Ascending aorta (tissue), 2 donors: ENCODE measurements at regions of chr2 and their contacts with region 1.

Region 1: DNA sequence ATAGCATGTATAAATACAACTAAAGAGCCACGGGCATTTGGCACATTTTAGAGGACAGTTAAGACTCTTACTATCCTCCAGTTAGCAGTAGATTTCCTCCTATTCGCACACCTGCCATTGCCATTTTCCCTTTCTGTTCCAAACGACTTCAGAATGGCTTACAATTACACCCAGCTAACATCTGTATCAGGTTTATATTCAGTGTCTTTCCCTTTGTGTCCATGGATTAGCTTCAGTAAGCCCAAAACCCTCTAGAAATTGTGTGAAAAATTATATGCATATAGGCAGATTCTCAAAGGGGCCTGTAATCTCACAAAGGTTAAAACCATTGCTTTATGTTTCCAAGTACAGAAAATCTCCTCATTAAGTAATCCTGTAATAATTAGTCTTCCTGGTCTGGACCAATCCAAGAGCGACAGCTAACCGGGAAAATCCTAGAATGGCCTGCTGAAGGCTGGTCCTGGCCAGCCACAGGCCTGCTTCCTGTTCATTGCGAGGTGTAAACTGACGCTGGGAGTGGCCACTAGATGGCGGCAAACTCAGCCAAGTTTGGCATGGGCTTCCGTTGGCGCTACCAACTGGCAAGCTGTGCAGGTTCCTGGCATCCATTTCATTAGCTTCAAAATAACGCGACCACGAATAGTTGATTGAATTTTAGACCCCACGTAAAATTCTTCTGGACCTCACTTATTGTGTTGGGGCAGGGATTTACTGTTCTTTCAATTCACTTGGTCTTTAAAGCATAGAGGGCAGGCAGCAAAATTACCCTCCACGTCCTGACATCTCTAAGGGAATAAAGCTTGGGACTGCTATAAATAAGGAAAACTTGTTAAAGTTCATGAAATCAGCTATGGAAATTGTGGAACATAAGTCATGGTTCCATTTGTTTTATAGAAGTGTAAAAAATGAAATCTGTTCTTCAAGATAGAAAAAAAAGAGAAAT is 17.1 kb downstream of the ARHGAP25 start:
- DNase-seq: peak; percentile 67 to 93
- H3K4me3 ChIP-seq: peak overlapping the region in 1 of 2 donors; percentile 29
- H3K27ac ChIP-seq: no peak overlapping the region
- H3K4me1 ChIP-seq: peaks cover 0 to 4% of the 10 kb centered on the region in 2 donors
- H3K27me3 ChIP-seq: no peaks in the 10 kb centered on the region
- CTCF ChIP-seq: peak; percentile 86 to 91 (median 89)

Region 2: GRCh38 chr2:68811364-68811763 is 59.7 kb after region 1 on chr2:
- intact Hi-C with region 1: loop called (anchors 5 kb)
- DNase-seq: peak in 1 of 2 donors; percentile 84
- H3K4me3 ChIP-seq: no peak overlapping the region
- H3K27ac ChIP-seq: peak overlapping the region; percentile 67 to 78
- H3K4me1 ChIP-seq: peaks cover 5 to 11% of the 10 kb centered on the region in 2 donors
- H3K27me3 ChIP-seq: no peaks in the 10 kb centered on the region
- CTCF ChIP-seq: no peak

Region 3: GRCh38 chr2:68832233-68832869 is 80.7 kb after region 1 on chr2:
- intact Hi-C with region 1: loop called (anchors 2 kb)
- DNase-seq: peak; percentile 70 to 94
- H3K4me3 ChIP-seq: no peak overlapping the region
- H3K27ac ChIP-seq: peak overlapping the region; percentile 95 to 97
- H3K4me1 ChIP-seq: peaks cover 28 to 45% of the 10 kb centered on the region in 2 donors
- H3K27me3 ChIP-seq: no peaks in the 10 kb centered on the region
- CTCF ChIP-seq: no peak

Region 4: DNA sequence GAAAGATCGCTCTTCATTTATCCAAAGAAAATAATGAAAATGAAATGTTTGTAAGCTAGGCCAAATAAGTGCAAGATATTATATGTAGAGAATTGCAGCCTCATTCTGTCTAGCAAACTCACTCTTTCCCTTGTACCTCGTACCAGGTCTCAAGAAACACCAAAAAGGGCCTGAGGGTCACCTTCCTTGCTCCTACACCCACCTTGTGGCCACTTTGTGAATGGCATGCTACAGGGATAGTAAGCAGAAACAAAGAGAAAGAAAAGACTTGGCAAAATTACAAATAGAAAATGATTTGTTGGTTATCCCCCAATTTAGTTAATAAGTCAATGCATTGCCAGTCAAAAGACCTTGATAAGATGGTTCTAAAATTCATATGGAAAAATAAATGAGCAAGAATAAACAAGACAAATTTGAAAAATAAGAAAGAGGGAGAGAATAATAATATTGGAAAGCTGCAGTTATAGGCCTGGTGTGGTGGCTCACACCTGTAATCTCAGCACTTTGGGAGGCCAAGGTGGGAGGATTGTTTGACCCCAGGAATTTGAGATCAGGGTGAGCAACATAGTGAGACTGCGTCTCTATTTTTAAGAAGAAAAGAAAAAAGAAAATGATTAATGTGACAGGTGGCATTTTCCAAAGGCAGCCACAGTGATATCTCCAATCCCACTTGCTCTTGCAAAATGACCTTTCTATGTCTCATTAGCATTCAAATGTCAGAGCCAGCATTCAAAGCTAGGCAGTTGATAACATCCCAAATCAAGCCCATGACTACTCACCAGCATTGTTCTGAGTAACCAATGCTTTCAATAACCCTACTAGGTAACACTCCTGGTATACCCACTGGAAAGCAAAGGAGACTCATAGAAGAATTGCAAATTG is 158.4 kb after region 1 on chr2:
- intact Hi-C with region 1: loop called (anchors 1 kb)
- DNase-seq: peak in 1 of 2 donors; percentile 86
- H3K4me3 ChIP-seq: no peak overlapping the region
- H3K27ac ChIP-seq: no peak overlapping the region
- H3K4me1 ChIP-seq: peaks cover 3 to 12% of the 10 kb centered on the region in 2 donors
- H3K27me3 ChIP-seq: no peaks in the 10 kb centered on the region
- CTCF ChIP-seq: peak; percentile 70 to 94 (median 89)

Region 5: GRCh38 chr2:68925295-68925896 is 173.7 kb after region 1 on chr2:
- intact Hi-C with region 1: loop called (anchors 5 kb)
- DNase-seq: no peak
- H3K4me3 ChIP-seq: no peak overlapping the region
- H3K27ac ChIP-seq: no peak overlapping the region
- H3K4me1 ChIP-seq: no peaks in the 10 kb centered on the region
- H3K27me3 ChIP-seq: no peaks in the 10 kb centered on the region
- CTCF ChIP-seq: peak; percentile 77 to 91 (median 83)